ENCODE measurements at regions of chr2 and their contacts with region 1.

Region 1: DNA sequence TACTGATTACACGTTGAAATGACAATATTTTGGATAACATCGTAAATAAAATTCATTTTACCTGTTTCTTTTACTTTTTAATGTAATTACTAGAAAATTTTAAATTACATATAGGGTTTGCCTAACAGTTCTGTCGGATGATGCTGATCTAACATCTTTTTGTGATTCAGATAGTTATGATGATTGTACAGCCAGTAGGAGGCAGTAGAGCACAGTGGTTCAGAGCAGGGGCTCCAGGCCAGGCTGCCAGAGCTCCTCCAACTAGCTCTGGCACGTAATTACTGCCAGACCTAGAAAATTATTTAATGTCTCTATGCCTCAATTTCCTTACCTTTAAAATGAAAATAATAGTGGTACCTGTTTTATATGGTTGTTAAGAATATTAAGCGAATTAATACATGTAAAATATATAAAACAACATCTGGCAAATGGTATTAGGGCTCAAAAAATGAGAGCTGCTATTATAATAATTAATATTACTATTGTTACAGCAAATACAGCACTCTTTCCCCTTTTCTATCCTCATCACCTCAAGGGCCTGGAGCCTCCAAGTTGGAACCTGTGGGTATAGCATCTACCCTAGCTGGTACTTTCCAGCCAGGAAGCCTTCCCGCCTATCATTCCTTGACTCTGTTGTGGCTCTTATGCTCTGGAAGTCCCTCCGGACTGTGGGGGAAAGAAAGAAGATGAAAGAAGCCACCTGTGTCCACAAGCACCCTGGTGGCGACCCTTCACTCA is 47.7 kb upstream of the PLA2R1 start:
- DNase-seq: peak; percentile 49
- H3K4me3 Mint-ChIP-seq: no peak overlapping the region
- H3K27ac Mint-ChIP-seq: no peak overlapping the region
- H3K4me1 Mint-ChIP-seq: no peaks in the 10 kb centered on the region
- H3K27me3 Mint-ChIP-seq: peaks cover 10% of the 10 kb centered on the region

Region 2: DNA sequence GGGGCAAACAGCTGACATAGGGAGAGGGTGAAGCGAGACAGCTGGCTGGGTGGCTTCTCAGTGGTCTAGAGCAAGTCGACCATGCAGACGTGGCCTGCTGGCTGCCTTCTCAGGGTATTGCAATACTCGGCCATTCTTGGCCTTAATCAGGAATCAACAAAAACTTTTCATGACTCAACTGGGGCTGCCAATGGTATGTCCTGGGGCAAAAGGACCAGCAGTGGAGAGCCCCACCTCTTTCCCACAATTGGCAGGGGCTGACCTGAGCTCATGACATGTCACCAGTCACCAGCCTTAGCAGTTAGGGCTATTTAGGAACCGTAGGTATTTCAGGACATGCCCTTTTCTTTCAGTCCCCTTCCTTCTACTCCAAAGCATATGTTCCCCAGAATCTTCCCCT is 66.8 kb before region 1 on chr2:
- CTCF ChIA-PET with region 1: no interaction called
- POLR2A ChIA-PET with region 1: no interaction called
- DNase-seq: no peak
- H3K4me3 Mint-ChIP-seq: no peak overlapping the region
- H3K27ac Mint-ChIP-seq: no peak overlapping the region
- H3K4me1 Mint-ChIP-seq: no peaks in the 10 kb centered on the region
- H3K27me3 Mint-ChIP-seq: peaks cover 15% of the 10 kb centered on the region

Region 3: DNA sequence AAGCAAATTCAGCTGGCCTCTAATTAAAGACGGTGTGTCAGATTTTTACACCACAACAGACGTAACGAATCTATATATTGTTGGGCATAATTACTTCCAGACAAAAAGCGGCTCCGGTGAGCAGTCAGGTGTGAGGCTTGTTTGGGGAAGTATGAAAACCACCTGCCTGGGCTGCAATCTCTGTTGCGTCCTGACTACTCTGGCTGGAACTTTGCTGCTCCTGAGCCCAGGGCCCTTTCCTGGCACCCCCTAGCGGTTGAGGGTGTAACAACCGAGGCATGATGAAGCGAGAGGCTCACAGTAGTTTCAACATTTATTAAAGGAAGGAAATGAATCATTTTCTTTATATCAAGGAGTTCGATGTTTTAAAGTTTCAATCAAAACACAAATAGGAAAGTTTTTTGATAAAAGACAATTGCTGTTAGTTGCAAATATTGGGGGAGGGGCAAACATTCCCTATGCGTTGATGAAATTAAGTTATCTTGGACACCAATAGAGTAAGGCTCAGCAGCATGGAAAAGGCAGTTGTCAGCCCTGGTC is 100.6 kb after region 1 on chr2:
- CTCF ChIA-PET with region 1: interaction called, 19 read pairs
- POLR2A ChIA-PET with region 1: no interaction called
- DNase-seq: peak; percentile 67
- H3K4me3 Mint-ChIP-seq: no peak overlapping the region
- H3K27ac Mint-ChIP-seq: no peak overlapping the region
- H3K4me1 Mint-ChIP-seq: peaks cover 23% of the 10 kb centered on the region
- H3K27me3 Mint-ChIP-seq: peaks cover 13% of the 10 kb centered on the region